Activated naive CD4-positive, alpha-beta T cell treated with anti-CD3 and anti-CD28 coated beads for 36 hours (primary cell): ENCODE measurements at regions of chr19 and their contacts with region 1.

Region 1: DNA sequence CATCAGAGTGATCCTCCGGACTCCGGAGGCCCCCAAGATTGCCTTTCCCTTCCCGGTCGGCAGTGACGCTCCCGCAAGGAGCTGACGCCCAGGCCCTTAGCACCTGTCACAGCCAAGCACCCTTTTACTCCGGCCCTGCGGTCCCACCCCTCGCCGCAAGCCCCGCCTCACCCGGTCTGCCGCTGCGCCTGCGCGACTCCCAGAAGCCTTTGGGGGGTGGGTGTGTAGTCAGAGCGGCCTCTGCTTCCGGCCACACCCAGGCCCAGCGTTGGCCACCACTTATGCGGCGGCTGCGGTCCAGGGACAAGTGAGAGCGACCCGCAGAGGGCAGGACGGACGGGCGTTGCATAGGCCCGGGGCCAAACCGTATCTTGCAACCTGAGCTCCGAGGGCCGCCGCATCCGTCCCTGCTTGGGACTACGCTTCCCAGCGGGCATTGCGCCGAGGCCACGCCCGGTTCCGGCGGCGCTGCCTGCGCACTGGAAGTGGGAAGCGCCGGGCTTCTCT is 441 bp upstream of the ZFP28 start:
- DNase-seq: peak; percentile 91
- H3K4me3 Mint-ChIP-seq: peak overlapping the region; percentile 83
- H3K27ac Mint-ChIP-seq: peak overlapping the region; percentile 88
- H3K4me1 Mint-ChIP-seq: peaks cover 16% of the 10 kb centered on the region
- H3K27me3 Mint-ChIP-seq: no peaks in the 10 kb centered on the region

Region 2: DNA sequence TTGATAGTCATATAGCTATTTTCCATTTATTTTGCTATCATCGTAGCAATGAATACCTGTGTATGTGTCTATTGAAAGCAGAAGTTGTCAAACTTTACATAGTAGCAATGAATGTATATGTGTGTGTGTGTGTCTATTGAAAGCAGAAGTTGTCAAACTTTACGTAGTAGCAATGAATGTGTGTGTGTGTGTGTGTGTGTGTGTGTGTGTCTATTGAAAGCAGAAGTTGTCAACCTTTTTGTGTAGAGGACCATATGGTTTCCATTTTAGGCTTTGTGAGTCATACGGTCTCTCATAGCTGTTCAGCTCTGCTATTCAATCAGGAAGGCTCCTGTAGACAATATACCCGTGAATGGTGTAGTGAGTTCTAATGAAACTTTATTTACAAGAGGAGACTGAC is 681.2 kb before region 1 on chr19:
- CTCF ChIA-PET with region 1: no interaction called
- intact Hi-C with region 1: no loop called
- DNase-seq: no peak
- H3K4me3 Mint-ChIP-seq: no peak overlapping the region
- H3K27ac Mint-ChIP-seq: no peak overlapping the region
- H3K4me1 Mint-ChIP-seq: no peaks in the 10 kb centered on the region
- H3K27me3 Mint-ChIP-seq: no peaks in the 10 kb centered on the region

Region 3: GRCh38 chr19:56403764-56404704 is 134.3 kb before region 1 on chr19 and contains the start of gene ZNF583:
- CTCF ChIA-PET with region 1: no interaction called
- intact Hi-C with region 1: loop called (anchors 2 kb)
- DNase-seq: peak; percentile 88
- H3K4me3 Mint-ChIP-seq: peak within 1 kb of the TSS; percentile 85
- H3K27ac Mint-ChIP-seq: peak within 1 kb of the TSS; percentile 96
- H3K4me1 Mint-ChIP-seq: peaks cover 32% of the 10 kb centered on the region
- H3K27me3 Mint-ChIP-seq: no peaks in the 10 kb centered on the region
- total RNA-seq, gene ZNF583: 0.55 to 1.2 TPM

Region 4: GRCh38 chr19:56567274-56568120 is 29.2 kb after region 1 on chr19 and contains the start of gene ZNF470:
- CTCF ChIA-PET with region 1: no interaction called
- intact Hi-C with region 1: loop called (anchors 1 kb)
- DNase-seq: peak; percentile 91
- H3K4me3 Mint-ChIP-seq: peak within 1 kb of the TSS; percentile 94
- H3K27ac Mint-ChIP-seq: peak within 1 kb of the TSS; percentile 73
- H3K4me1 Mint-ChIP-seq: peaks cover 13% of the 10 kb centered on the region
- H3K27me3 Mint-ChIP-seq: no peaks in the 10 kb centered on the region
- total RNA-seq, gene ZNF470: 0.99 to 1.5 TPM

Region 5: GRCh38 chr19:56594783-56595547 is 56.7 kb after region 1 on chr19 and contains the start of gene ZNF71:
- CTCF ChIA-PET with region 1: no interaction called
- intact Hi-C with region 1: loop called (anchors 5 kb)
- DNase-seq: peak; percentile 91
- H3K4me3 Mint-ChIP-seq: peak within 1 kb of the TSS; percentile 92
- H3K27ac Mint-ChIP-seq: peak within 1 kb of the TSS; percentile 52
- H3K4me1 Mint-ChIP-seq: peaks cover 21% of the 10 kb centered on the region
- H3K27me3 Mint-ChIP-seq: no peaks in the 10 kb centered on the region
- total RNA-seq, gene ZNF71: 2.5 to 3.0 TPM